B cell (primary cell): ENCODE measurements at regions of chr3 and their contacts with region 1.

Region 1: GRCh38 chr3:188244395-188244861 is 90.5 kb downstream of the LPP start:
- DNase-seq: peak; percentile 56
- ATAC-seq: peak; percentile 64
- H3K4me3 ChIP-seq: no peak overlapping the region
- H3K4me3 Mint-ChIP-seq: peak overlapping the region; percentile 42
- H3K27ac ChIP-seq: peak overlapping the region; percentile 43 to 79
- H3K27ac Mint-ChIP-seq: peak overlapping the region; percentile 60
- H3K4me1 ChIP-seq: peaks cover 53 to 54% of the 10 kb centered on the region in 2 donors
- H3K4me1 Mint-ChIP-seq: peaks cover 70% of the 10 kb centered on the region
- H3K27me3 ChIP-seq: no peaks in the 10 kb centered on the region
- H3K27me3 Mint-ChIP-seq: no peaks in the 10 kb centered on the region
- CTCF ChIP-seq: no peak

Region 2: DNA sequence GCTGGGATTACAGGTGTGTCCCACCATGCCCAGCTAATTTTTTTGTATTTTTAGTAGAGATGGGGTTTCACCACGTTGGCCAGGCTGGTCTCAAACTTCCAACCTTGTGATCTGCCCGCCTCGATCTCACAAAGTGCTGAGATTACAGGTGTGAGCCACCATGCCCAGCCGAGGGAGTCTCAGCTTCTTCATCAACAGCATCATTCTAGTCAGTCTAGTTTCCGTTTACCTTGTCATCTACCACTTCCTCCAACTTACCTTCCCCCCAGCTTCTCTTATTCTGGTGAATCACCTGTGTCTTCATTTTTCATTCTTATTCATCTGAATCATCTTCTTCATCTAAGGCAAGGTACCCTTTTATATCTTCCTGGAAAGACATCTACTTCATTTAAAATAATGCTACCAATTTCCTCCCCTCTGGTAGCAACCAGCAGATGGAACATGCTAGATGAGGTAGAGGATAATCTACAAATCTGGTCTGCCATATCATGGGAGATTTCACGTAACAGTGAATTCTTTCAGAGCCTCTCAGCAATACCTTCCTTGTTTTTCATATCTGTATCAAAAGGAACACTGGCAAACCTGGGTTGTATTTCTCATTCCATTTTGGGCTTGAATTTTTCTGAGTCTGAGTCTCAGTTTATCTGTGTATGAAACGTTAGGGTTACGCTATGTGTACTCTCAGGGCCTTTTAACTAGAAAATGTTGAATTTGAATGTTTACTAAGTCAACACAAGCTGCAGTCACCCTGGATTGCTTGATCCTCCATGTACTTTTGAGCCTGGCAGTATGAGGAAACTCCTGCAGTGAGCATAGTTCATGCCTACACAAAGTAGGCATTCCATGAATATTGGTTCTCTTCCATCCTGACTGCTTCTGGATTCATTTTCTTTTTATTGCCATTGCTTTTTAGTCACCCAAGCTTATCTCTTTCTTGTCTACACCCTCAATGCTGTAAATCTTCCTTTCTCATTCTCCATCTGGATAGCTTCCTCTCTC is 73.7 kb before region 1 on chr3:
- CTCF ChIA-PET with region 1: no interaction called
- POLR2A ChIA-PET with region 1: no interaction called
- intact Hi-C with region 1: loop called (anchors 5 kb)
- DNase-seq: peak; percentile 51
- ATAC-seq: peak; percentile 31
- H3K4me3 ChIP-seq: no peak overlapping the region
- H3K4me3 Mint-ChIP-seq: no peak overlapping the region
- H3K27ac ChIP-seq: peak overlapping the region in 1 of 2 donors; percentile 41
- H3K27ac Mint-ChIP-seq: peak overlapping the region; percentile 3
- H3K4me1 ChIP-seq: peaks cover 28 to 30% of the 10 kb centered on the region in 2 donors
- H3K4me1 Mint-ChIP-seq: peaks cover 39% of the 10 kb centered on the region
- H3K27me3 ChIP-seq: no peaks in the 10 kb centered on the region
- H3K27me3 Mint-ChIP-seq: no peaks in the 10 kb centered on the region
- CTCF ChIP-seq: no peak

Region 3: GRCh38 chr3:188212308-188212969 is 32.0 kb before region 1 on chr3:
- CTCF ChIA-PET with region 1: no interaction called
- POLR2A ChIA-PET with region 1: no interaction called
- intact Hi-C with region 1: loop called (anchors 2 kb)
- DNase-seq: no peak
- ATAC-seq: no peak
- H3K4me3 ChIP-seq: no peak overlapping the region
- H3K4me3 Mint-ChIP-seq: no peak overlapping the region
- H3K27ac ChIP-seq: no peak overlapping the region
- H3K27ac Mint-ChIP-seq: peak overlapping the region; percentile 59
- H3K4me1 ChIP-seq: peaks cover 29 to 31% of the 10 kb centered on the region in 2 donors
- H3K4me1 Mint-ChIP-seq: peaks cover 40% of the 10 kb centered on the region
- H3K27me3 ChIP-seq: no peaks in the 10 kb centered on the region
- H3K27me3 Mint-ChIP-seq: no peaks in the 10 kb centered on the region
- CTCF ChIP-seq: no peak

Region 4: GRCh38 chr3:188283347-188283746 is 38.9 kb after region 1 on chr3:
- CTCF ChIA-PET with region 1: no interaction called
- POLR2A ChIA-PET with region 1: no interaction called
- intact Hi-C with region 1: no loop called
- DNase-seq: no peak
- ATAC-seq: no peak
- H3K4me3 ChIP-seq: no peak overlapping the region
- H3K4me3 Mint-ChIP-seq: no peak overlapping the region
- H3K27ac ChIP-seq: no peak overlapping the region
- H3K27ac Mint-ChIP-seq: no peak overlapping the region
- H3K4me1 ChIP-seq: peaks cover 8 to 13% of the 10 kb centered on the region in 2 donors
- H3K4me1 Mint-ChIP-seq: peaks cover 49% of the 10 kb centered on the region
- H3K27me3 ChIP-seq: no peaks in the 10 kb centered on the region
- H3K27me3 Mint-ChIP-seq: no peaks in the 10 kb centered on the region
- CTCF ChIP-seq: no peak

Region 5: DNA sequence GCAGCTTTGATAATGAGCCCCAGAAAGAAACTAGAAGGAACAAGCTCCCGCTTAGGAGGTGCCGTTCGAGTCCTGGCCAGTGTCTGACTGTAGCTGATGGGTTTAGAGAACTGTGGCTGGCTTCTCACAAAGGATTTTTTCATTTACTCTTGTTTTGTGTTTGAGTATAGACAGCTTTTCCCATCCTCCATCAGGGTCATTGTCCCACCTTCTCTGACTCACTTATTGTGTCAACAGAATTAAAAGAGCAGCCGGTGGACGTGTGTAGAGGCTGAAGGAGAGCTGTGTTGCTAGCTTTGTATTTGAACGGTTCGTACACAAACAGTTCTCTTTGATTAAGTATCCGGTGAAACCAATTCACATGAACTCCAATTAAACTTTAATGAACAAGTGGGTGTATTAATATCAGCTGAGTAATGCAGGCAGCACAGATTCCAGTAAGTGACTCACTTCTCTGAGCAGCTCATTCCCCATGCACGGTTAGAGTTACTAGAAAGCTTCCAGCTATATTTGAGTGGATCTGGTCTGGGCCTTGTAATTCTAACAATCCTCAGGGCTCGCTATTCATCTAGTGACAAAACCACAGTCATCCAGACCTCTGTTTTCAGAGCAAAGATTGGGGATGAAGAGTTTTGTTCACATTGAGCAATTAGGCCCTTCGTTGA is 50.5 kb after region 1 on chr3:
- CTCF ChIA-PET with region 1: no interaction called
- POLR2A ChIA-PET with region 1: no interaction called
- intact Hi-C with region 1: loop called (anchors 10 kb)
- DNase-seq: no peak
- ATAC-seq: no peak
- H3K4me3 ChIP-seq: no peak overlapping the region
- H3K4me3 Mint-ChIP-seq: peak overlapping the region; percentile 49
- H3K27ac ChIP-seq: no peak overlapping the region
- H3K27ac Mint-ChIP-seq: no peak overlapping the region
- H3K4me1 ChIP-seq: peaks cover 55 to 57% of the 10 kb centered on the region in 2 donors
- H3K4me1 Mint-ChIP-seq: peaks cover 86% of the 10 kb centered on the region
- H3K27me3 ChIP-seq: no peaks in the 10 kb centered on the region
- H3K27me3 Mint-ChIP-seq: no peaks in the 10 kb centered on the region
- CTCF ChIP-seq: no peak

Region 6: DNA sequence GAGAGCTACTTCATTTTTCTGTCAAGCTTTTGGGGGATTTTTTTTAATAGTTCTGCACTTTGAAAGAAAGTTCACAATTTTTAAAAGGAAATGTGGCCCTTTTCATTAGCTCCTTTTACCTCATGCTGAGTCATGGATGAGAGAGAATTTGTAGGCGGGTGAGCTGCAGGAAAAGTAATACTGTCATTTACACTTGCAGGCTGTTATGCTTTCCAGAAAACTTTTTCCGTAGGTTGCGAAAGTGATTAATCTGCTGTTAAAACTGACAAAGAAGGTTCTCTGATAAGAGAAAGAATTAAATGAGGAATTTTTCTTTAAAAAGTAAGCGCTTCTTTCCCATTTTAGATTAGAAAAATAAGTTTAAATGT is 339.7 kb after region 1 on chr3:
- CTCF ChIA-PET with region 1: no interaction called
- POLR2A ChIA-PET with region 1: no interaction called
- intact Hi-C with region 1: loop called (anchors 5 kb)
- DNase-seq: no peak
- ATAC-seq: no peak
- H3K4me3 ChIP-seq: peak overlapping the region in 1 of 5 experiments; percentile 13
- H3K4me3 Mint-ChIP-seq: no peak overlapping the region
- H3K27ac ChIP-seq: peak overlapping the region; percentile 6 to 73
- H3K27ac Mint-ChIP-seq: no peak overlapping the region
- H3K4me1 ChIP-seq: peaks cover 49 to 53% of the 10 kb centered on the region in 2 donors
- H3K4me1 Mint-ChIP-seq: peaks cover 32% of the 10 kb centered on the region
- H3K27me3 ChIP-seq: no peaks in the 10 kb centered on the region
- H3K27me3 Mint-ChIP-seq: no peaks in the 10 kb centered on the region
- CTCF ChIP-seq: no peak